HAP-1 (cell line): ENCODE measurements at regions of chr10 and their contacts with region 1.

Region 1: GRCh38 chr10:12710594-12711349 is 290.7 kb downstream of the CCDC3 start:
- DNase-seq: peak; percentile 76 to 83
- H3K4me3 ChIP-seq: no peak overlapping the region
- H3K4me1 ChIP-seq: no peaks in the 10 kb centered on the region
- H3K27me3 ChIP-seq: no peaks in the 10 kb centered on the region

Region 2: GRCh38 chr10:12264204-12264940 is 446.4 kb before region 1 on chr10:
- in situ Hi-C with region 1: loop called (anchors 5 kb)
- DNase-seq: peak; percentile 91 to 92
- H3K4me3 ChIP-seq: peak overlapping the region; percentile 4; the same call in 1 of the 2 replicates
- H3K4me1 ChIP-seq: peaks cover 3% of the 10 kb centered on the region
- H3K27me3 ChIP-seq: no peaks in the 10 kb centered on the region

Region 3: GRCh38 chr10:13074561-13075451 is 364.0 kb after region 1 on chr10:
- in situ Hi-C with region 1: loop called (anchors 25 kb)
- DNase-seq: peak; percentile 72 to 83
- H3K4me3 ChIP-seq: no peak overlapping the region
- H3K4me1 ChIP-seq: no peaks in the 10 kb centered on the region
- H3K27me3 ChIP-seq: peaks cover 4% of the 10 kb centered on the region